ENCODE measurements at regions of chr6 and their contacts with region 1.

Region 1: DNA sequence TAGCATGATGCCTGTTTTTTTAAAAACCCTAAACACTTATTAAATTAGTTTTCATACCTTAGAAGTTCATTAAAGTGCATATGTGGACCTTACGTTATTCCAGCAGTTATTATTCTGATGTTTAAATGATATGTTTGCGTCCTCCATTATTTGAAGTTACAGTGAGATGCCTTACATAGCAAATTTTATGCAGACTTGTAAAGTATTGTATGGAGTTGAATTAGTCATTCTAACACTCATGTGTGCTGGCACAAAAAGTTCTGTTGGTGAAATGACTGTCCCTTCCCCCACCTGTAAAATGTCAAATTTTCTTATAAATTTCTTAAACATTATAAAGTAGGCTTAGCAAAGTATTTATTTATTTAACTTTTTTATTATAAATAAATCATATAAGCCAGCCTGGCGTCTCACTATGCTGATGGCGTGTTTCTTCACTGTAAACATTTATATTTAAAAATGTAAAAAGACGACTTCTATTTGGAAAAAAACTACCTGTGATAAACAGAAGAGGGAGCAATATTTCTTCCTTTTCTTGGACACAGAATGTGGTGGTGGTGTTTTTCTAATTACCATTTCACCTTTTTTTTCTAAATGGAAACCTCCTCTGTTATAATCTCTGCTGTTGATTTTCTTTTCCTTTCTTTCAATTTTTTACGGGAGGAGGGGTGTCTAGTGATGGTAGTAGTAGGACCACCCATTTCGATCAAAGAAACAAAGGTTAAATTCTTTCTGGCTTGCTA is 155.4 kb downstream of the RFPL4B start:
- DNase-seq: peak; percentile 52
- H3K4me3 ChIP-seq: 0 out of 2 replicates have a peak overlapping the region, but pooled peaks have one; percentile 7
- H3K27ac ChIP-seq: no peak overlapping the region
- H3K4me1 ChIP-seq: peaks cover 15% of the 10 kb centered on the region
- H3K27me3 ChIP-seq: no peaks in the 10 kb centered on the region

Region 2: DNA sequence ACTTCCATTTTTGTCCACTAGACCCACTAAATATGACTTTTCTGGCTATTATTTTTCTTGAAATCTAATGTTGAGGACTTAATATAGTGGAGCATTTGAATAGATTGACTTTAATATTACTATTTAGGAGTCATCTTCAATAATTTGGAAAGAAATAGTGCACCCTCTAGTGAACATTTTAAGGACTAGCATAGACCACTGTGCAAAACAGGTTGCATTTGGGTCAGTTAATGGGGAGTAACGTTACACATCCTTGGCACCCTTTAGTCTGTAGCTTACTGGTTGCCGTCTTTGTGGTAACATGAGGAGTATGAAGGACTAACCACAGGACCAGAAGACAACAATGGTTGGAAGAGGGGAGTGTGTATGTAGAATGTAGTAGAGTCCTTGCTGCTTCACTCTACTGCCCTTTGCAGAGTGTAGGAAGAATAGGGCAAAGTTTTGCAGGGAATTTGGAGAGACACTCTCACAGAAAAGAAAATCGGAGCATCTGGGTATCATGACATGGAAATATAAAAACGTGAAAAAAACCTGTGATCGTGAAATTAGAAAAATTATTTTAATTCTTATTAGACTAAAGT is 130.2 kb before region 1 on chr6:
- in situ Hi-C with region 1: no loop called
- DNase-seq: peak; percentile 66
- H3K4me3 ChIP-seq: no peak overlapping the region
- H3K27ac ChIP-seq: no peak overlapping the region
- H3K4me1 ChIP-seq: no peaks in the 10 kb centered on the region
- H3K27me3 ChIP-seq: no peaks in the 10 kb centered on the region

Region 3: GRCh38 chr6:112773187-112773586 is 270.7 kb after region 1 on chr6:
- in situ Hi-C with region 1: loop called (anchors 10 kb)
- DNase-seq: peak; percentile 53
- H3K4me3 ChIP-seq: no peak overlapping the region; the same call in 1 of the 2 replicates
- H3K27ac ChIP-seq: peak overlapping the region; percentile 6; the same call in 1 of the 2 replicates
- H3K4me1 ChIP-seq: peaks cover 18% of the 10 kb centered on the region
- H3K27me3 ChIP-seq: no peaks in the 10 kb centered on the region

Region 4: DNA sequence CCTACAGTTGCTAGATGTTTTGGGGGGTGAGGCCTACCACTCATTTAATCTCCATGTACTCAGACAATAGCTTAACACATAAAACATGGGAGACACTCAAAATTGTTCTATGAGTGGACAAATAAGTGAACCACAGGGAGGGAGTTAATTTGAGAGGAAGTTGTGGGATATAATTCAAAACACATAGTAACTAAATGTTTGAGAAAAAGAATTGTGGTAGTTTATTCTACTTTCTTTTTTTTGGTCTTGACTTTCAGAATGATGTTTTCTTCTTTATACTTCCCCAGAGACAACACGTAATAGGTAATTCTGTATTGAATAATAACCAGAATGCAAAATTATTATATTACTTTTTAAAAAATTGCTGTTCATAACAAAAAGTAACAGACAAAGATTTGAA is 298.4 kb after region 1 on chr6:
- in situ Hi-C with region 1: no loop called
- DNase-seq: peak; percentile 7
- H3K4me3 ChIP-seq: no peak overlapping the region
- H3K27ac ChIP-seq: no peak overlapping the region
- H3K4me1 ChIP-seq: peaks cover 31% of the 10 kb centered on the region
- H3K27me3 ChIP-seq: no peaks in the 10 kb centered on the region

Region 5: GRCh38 chr6:113879186-113880096 is 1376.9 kb after region 1 on chr6:
- in situ Hi-C with region 1: loop called (anchors 25 kb)
- DNase-seq: peak; percentile 87
- H3K4me3 ChIP-seq: 0 out of 2 replicates have a peak overlapping the region, but pooled peaks have one; percentile 17
- H3K27ac ChIP-seq: no peak overlapping the region
- H3K4me1 ChIP-seq: peaks cover 19% of the 10 kb centered on the region
- H3K27me3 ChIP-seq: no peaks in the 10 kb centered on the region

Measured in GM23248 (cell line).